Gastrocnemius medialis (tissue), 4 donors: ENCODE measurements at regions of chr1 and their contacts with region 1.

Region 1: GRCh38 chr1:22641906-22642636 is 1.4 kb upstream of the C1QC start:
- DNase-seq: peak; percentile 51 to 65
- ATAC-seq: peak; percentile 81 to 83
- H3K4me3 ChIP-seq: no peak overlapping the region
- H3K27ac ChIP-seq: no peak overlapping the region
- H3K4me1 ChIP-seq: no peaks in the 10 kb centered on the region
- H3K27me3 ChIP-seq: no peaks in the 10 kb centered on the region
- CTCF ChIP-seq: peak; percentile 71 to 96 (median 90)
- POLR2A ChIP-seq: no peak

Region 2: DNA sequence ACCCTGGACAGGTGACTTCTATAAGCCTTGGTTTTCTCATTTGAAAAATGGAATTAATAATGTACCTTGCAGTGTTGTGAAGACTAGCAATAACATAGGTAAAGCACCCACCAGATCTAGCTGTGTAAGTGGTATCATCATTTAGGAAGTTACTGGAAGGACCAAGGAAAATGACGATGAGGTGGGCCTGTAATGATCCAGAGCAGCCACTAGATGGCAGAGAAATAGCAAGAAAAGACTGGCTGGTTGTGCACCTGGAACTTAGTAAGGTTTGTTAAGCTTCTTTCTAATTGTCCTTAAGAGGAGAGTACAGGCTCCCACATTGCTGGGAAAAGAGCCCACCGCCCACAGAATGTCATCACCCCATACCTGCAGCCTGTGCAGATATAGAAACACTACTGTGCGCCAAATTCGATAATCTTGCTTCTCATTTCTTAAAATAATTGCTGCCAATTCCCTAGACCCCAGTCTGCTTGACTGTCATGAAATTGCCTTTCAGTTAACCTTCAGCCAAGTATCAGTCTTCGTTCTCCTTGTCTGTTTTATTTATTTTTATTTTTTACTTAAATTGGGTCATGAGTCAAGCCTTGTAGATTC is 536.4 kb before region 1 on chr1:
- in situ Hi-C with region 1: loop called in 2 of 4 experiments (anchors 25 kb)
- intact Hi-C with region 1: no loop called
- DNase-seq: no peak
- ATAC-seq: peak; percentile 55 to 63
- H3K4me3 ChIP-seq: no peak overlapping the region
- H3K27ac ChIP-seq: no peak overlapping the region
- H3K4me1 ChIP-seq: peaks cover 4 to 8% of the 10 kb centered on the region in 2 donors
- H3K27me3 ChIP-seq: no peaks in the 10 kb centered on the region
- CTCF ChIP-seq: peak; percentile 73 to 82 (median 79)
- POLR2A ChIP-seq: no peak